ENCODE measurements at regions of chr17 and their contacts with region 1.

Region 1: GRCh38 chr17:19753049-19753444 is 4.9 kb upstream of the ALDH3A1 start:
- DNase-seq: peak; percentile 97
- H3K4me3 Mint-ChIP-seq: peak overlapping the region; percentile 9
- H3K27ac Mint-ChIP-seq: peak overlapping the region; percentile 79
- H3K4me1 Mint-ChIP-seq: peaks cover 56% of the 10 kb centered on the region
- H3K27me3 Mint-ChIP-seq: no peaks in the 10 kb centered on the region
- CTCF ChIP-seq: no peak

Region 2: GRCh38 chr17:19447085-19447583 is 305.9 kb before region 1 on chr17:
- CTCF ChIA-PET with region 1: no interaction called
- POLR2A ChIA-PET with region 1: interaction called, 16 read pairs
- intact Hi-C with region 1: no loop called
- DNase-seq: peak; percentile 73
- H3K4me3 Mint-ChIP-seq: no peak overlapping the region
- H3K27ac Mint-ChIP-seq: peak overlapping the region; percentile 93
- H3K4me1 Mint-ChIP-seq: peaks cover 27% of the 10 kb centered on the region
- H3K27me3 Mint-ChIP-seq: no peaks in the 10 kb centered on the region
- CTCF ChIP-seq: peak; percentile 88

Region 3: GRCh38 chr17:19706791-19707727 is 46.0 kb before region 1 on chr17:
- CTCF ChIA-PET with region 1: interaction called, 11 read pairs
- POLR2A ChIA-PET with region 1: interaction called, 33 read pairs
- intact Hi-C with region 1: no loop called
- DNase-seq: peak; percentile 87
- H3K4me3 Mint-ChIP-seq: no peak overlapping the region
- H3K27ac Mint-ChIP-seq: peak overlapping the region; percentile 27
- H3K4me1 Mint-ChIP-seq: peaks cover 10% of the 10 kb centered on the region
- H3K27me3 Mint-ChIP-seq: no peaks in the 10 kb centered on the region
- CTCF ChIP-seq: no peak

Region 4: DNA sequence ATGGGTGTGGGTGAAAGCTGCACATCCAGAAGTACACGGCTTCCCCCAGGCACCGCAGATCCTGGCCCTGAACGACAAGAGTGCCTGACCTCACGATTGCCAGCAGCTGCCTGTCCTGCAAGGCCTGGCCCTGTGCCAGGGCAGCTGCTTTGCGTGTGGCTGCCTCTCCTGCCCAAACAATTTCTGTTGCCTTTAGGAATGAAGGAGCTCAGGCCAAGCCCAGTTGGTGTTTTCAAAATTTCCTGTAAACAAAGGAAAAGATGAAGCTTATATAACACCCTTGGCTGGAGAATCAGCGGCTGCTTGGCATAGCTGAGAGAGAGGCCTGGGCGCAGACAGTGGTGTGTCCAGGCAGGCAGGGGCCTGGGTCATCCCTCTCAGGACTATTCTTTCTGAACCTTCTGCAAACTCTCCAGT is 25.0 kb before region 1 on chr17:
- CTCF ChIA-PET with region 1: interaction called, 46 read pairs
- POLR2A ChIA-PET with region 1: interaction called, 311 read pairs
- intact Hi-C with region 1: loop called (anchors 1 kb)
- DNase-seq: peak; percentile 96
- H3K4me3 Mint-ChIP-seq: no peak overlapping the region
- H3K27ac Mint-ChIP-seq: peak overlapping the region; percentile 97
- H3K4me1 Mint-ChIP-seq: peaks cover 25% of the 10 kb centered on the region
- H3K27me3 Mint-ChIP-seq: no peaks in the 10 kb centered on the region
- CTCF ChIP-seq: no peak

Region 5: DNA sequence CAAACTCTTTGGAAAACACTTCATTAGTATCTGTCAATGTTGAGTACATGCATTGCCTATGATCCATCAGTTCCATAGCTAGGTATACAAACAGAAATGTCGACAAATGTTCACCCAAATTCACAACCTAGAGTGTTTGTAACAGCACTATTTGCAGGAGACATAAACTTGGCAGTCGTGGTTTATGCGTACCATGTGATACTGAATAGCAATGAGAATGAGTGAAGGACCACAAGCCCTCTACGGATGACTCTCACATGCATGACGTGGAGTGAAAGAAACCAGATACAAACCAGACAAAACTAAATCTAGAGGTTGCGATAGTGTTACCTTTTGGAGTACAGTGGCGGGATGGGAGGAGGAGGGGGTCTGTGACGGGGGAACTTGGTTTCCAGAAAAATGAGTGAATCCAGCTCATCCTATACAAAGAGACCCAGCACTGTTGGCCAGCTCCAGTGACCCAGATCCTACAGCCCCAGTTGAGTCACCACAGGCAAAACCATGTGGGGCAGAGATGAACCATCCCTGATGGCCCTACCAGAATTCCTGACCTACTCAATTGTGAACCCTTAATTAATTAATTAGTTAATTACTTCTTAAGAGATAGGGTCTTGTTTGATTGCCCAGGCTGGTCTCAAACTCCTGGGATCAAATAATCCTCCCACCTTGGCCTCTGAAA is 130.6 kb after region 1 on chr17:
- CTCF ChIA-PET with region 1: no interaction called
- POLR2A ChIA-PET with region 1: no interaction called
- intact Hi-C with region 1: no loop called
- DNase-seq: no peak
- H3K4me3 Mint-ChIP-seq: no peak overlapping the region
- H3K27ac Mint-ChIP-seq: no peak overlapping the region
- H3K4me1 Mint-ChIP-seq: no peaks in the 10 kb centered on the region
- H3K27me3 Mint-ChIP-seq: peaks cover 14% of the 10 kb centered on the region
- CTCF ChIP-seq: no peak